ENCODE measurements at regions of chr14 and their contacts with region 1.

Region 1: GRCh38 chr14:77076113-77076631 is 21.9 kb upstream of the CIPC start:
- DNase-seq: peak; percentile 96
- H3K4me3 Mint-ChIP-seq: peak overlapping the region; percentile 43
- H3K27ac Mint-ChIP-seq: peak overlapping the region; percentile 76
- H3K4me1 Mint-ChIP-seq: peaks cover 20% of the 10 kb centered on the region
- H3K27me3 Mint-ChIP-seq: no peaks in the 10 kb centered on the region
- CTCF ChIP-seq: no peak

Region 2: GRCh38 chr14:76882651-76883050 is 193.5 kb before region 1 on chr14:
- CTCF ChIA-PET with region 1: interaction called, 523 read pairs
- POLR2A ChIA-PET with region 1: no interaction called
- intact Hi-C with region 1: no loop called
- DNase-seq: no peak
- H3K4me3 Mint-ChIP-seq: no peak overlapping the region
- H3K27ac Mint-ChIP-seq: no peak overlapping the region
- H3K4me1 Mint-ChIP-seq: no peaks in the 10 kb centered on the region
- H3K27me3 Mint-ChIP-seq: no peaks in the 10 kb centered on the region
- CTCF ChIP-seq: no peak

Region 3: DNA sequence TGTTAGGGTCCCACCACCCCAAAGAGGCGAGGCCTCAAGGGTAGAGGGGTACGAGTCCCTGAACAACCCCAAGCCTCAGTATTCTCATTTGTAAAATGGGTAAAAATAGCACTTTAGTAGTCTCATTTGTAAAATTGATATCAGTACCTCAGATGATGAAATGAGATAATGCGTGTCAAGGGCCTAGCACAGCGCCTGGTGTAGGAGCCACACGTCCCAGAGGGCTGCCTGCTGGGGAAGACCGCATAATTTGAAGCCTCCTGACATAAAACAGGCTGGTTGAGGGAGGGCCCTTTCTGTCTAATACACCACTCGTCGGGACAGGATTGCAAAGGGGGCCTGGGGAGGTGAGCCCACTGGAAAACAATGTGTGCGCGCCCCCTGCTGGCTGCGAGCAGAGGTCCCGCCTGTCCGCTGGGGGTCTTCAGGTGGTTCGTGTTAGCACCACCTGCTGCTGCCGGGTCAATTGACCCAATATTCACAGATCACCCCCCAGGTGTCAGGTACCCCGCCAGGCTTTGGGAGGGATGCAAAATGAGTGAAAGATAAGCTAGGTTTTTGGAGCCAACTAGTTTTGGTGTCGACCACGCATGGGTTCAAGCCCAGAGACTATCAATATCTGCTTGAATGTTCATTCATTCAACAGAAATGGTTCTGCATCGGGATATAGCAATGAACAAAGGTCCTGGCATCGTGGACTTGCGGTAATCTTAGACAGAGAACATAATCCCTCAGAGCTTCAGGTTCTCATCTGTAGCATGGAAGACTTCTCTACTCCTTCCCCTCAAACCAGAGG is 22.9 kb before region 1 on chr14:
- CTCF ChIA-PET with region 1: interaction called, 45 read pairs
- POLR2A ChIA-PET with region 1: no interaction called
- intact Hi-C with region 1: no loop called
- DNase-seq: peak; percentile 63
- H3K4me3 Mint-ChIP-seq: no peak overlapping the region
- H3K27ac Mint-ChIP-seq: peak overlapping the region; percentile 90
- H3K4me1 Mint-ChIP-seq: peaks cover 15% of the 10 kb centered on the region
- H3K27me3 Mint-ChIP-seq: no peaks in the 10 kb centered on the region
- CTCF ChIP-seq: peak; percentile 71

Region 4: GRCh38 chr14:77086017-77086736 is 10.0 kb after region 1 on chr14:
- CTCF ChIA-PET with region 1: interaction called, 188 read pairs
- POLR2A ChIA-PET with region 1: interaction called, 13 read pairs
- intact Hi-C with region 1: no loop called
- DNase-seq: no peak
- H3K4me3 Mint-ChIP-seq: no peak overlapping the region
- H3K27ac Mint-ChIP-seq: no peak overlapping the region
- H3K4me1 Mint-ChIP-seq: peaks cover 6% of the 10 kb centered on the region
- H3K27me3 Mint-ChIP-seq: no peaks in the 10 kb centered on the region
- CTCF ChIP-seq: no peak

Measured in MCF 10A (cell line).